ENCODE measurements at regions of chr9 and their contacts with region 1.

Region 1: DNA sequence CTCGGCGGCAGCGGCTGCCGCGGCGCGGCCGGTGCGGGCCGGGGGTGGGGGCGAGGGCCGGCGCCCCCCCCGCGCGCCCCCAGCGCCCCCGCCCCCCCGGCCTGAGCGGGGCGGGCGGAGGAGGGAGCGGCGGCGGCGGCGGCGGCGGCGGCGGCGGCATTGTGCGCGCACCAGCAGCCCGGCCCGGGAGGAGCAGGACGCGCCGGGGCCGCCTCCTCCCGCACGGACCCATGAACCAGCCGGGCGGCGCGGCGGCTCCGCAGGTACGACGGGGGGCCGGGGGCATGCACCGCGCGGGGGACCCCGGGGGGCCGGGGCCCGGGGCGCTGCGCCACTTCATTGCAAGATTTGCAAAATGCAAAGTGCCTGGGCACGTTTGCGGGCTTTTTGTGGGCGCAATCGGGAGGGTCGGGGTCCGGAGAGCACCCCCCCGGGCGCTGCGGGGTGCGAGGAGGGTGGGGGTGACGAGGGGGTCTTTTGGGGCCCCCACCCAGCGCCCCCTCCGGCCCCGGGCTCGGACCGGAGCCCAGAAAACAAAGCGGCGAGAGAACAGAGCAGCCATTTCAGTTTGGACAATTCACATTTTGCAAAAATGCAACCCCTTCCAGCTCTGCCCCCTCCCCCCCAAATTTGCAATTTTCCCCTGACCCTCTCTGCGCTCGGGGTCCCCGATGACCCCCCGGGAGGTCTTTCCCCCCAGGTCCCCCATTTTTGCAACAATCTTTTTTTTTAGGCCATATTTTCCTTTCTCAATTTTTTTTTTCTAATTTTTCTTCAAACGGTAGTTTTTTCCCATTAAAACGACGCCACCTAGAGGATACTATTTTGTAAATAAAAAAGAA is at the start of gene ZNF618:
- DNase-seq: peak; percentile 11 to 40
- ATAC-seq: peak; percentile 50 to 89 (median 70)
- H3K4me3 ChIP-seq: peak within 1 kb of the TSS; percentile 68 to 93 (median 86)
- H3K27ac ChIP-seq: peak within 1 kb of the TSS in 9 of 10 donors; percentile 35 to 82 (median 72)
- H3K4me1 ChIP-seq: peaks cover 0 to 32% (median 16%) of the 10 kb centered on the region in 9 donors
- H3K27me3 ChIP-seq: peaks cover 0 to 12% (median 0%) of the 10 kb centered on the region in 7 donors
- CTCF ChIP-seq: peak in 7 of 9 donors; percentile 38 to 61 (median 47)
- total RNA-seq, gene ZNF618: 1.1 to 2.5 (median 1.6) TPM

Region 2: GRCh38 chr9:113817171-113817570 is 59.2 kb before region 1 on chr9:
- intact Hi-C with region 1: loop called in 1 of 10 experiments (anchors 10 kb)
- DNase-seq: no peak
- ATAC-seq: no peak
- H3K4me3 ChIP-seq: no peak overlapping the region
- H3K27ac ChIP-seq: no peak overlapping the region
- H3K4me1 ChIP-seq: no peaks in the 10 kb centered on the region
- H3K27me3 ChIP-seq: peaks cover 0 to 27% (median 6%) of the 10 kb centered on the region in 7 donors
- CTCF ChIP-seq: no peak

Region 3: GRCh38 chr9:113906411-113907110 is 30.2 kb after region 1 on chr9:
- intact Hi-C with region 1: loop called in 1 of 10 experiments (anchors 1 kb)
- DNase-seq: no peak
- ATAC-seq: peak in 2 of 8 donors; percentile 25 to 49
- H3K4me3 ChIP-seq: no peak overlapping the region
- H3K27ac ChIP-seq: no peak overlapping the region
- H3K4me1 ChIP-seq: peaks cover 0 to 13% (median 0%) of the 10 kb centered on the region in 9 donors
- H3K27me3 ChIP-seq: no peaks in the 10 kb centered on the region
- CTCF ChIP-seq: no peak

Region 4: GRCh38 chr9:113934829-113935676 is 58.7 kb after region 1 on chr9:
- intact Hi-C with region 1: no loop called
- DNase-seq: no peak
- ATAC-seq: peak in 3 of 8 donors; percentile 13 to 38 (median 16)
- H3K4me3 ChIP-seq: no peak overlapping the region
- H3K27ac ChIP-seq: no peak overlapping the region
- H3K4me1 ChIP-seq: peaks cover 0 to 27% (median 3%) of the 10 kb centered on the region in 9 donors
- H3K27me3 ChIP-seq: no peaks in the 10 kb centered on the region
- CTCF ChIP-seq: no peak

Region 5: DNA sequence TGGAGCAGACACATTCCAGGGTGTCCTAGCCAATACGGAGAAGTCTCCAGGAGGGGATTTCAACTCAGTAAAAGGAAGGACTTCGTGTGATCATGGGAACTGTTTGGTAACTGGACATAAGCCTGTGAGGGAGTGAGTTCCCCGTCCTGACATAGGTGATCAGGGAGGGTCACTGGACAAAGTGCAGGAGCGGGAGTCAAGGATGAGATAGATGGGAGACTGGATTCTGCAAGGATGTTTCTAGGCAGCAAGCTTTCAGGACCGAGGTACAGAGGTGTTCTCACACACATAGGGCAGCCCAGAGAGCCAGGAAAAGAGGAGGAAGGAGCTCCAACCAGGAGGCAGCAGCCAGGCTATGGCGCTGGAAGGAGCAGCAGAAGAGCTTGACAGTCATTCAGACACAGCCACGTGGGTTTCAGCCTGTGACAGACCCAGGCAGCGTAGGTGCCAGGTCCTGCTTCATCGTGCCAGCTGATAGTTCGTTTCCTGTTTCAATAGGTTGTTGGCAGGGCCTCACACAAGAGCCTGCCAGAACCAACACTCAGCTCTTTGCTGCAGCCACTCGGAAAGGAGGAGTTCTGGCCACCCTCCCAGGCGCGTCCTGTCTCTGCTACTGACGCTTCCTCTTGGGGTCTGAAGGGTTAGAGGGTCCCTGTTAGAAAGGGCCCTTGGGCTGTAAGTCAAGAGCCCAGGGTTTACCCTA is 117.6 kb after region 1 on chr9:
- intact Hi-C with region 1: loop called in 2 of 10 experiments (anchors 10 kb)
- DNase-seq: peak; percentile 86 to 89
- ATAC-seq: peak; percentile 81 to 95 (median 90)
- H3K4me3 ChIP-seq: no peak overlapping the region
- H3K27ac ChIP-seq: peak overlapping the region in 4 of 10 donors; percentile 8 to 48 (median 38)
- H3K4me1 ChIP-seq: peaks cover 21 to 65% (median 42%) of the 10 kb centered on the region in 9 donors
- H3K27me3 ChIP-seq: no peaks in the 10 kb centered on the region
- CTCF ChIP-seq: no peak

Region 6: DNA sequence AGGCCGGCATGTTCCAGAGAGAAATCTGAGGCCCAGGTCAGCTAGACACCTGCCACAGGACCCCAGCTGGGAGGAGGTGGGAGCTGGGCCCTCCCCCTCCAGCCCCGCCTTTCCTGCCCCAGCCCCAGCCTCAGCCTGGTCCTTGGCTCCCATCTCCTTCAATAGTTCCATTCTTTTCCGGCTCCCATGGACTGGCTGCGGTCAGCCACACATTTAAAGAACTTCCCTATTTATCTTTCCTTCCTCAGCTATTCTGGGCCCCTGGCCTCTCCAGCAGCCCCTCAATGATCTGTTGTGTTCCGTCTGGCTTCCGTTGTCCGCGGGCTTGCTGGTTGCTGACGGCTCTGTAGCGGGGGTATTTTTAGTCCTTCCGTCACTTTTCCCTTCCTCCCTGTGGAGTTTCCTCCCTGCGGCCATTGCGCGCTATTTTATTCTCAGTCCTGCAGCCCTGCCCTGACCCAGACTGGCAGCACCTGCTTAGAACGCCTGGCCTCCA is 127.9 kb after region 1 on chr9:
- intact Hi-C with region 1: loop called in 3 of 10 experiments (anchors 5 to 10 kb)
- DNase-seq: peak; percentile 59 to 89
- ATAC-seq: peak; percentile 89 to 95 (median 93)
- H3K4me3 ChIP-seq: peak overlapping the region in 5 of 10 donors; percentile 8 to 33 (median 23)
- H3K27ac ChIP-seq: peak overlapping the region; percentile 38 to 89 (median 66)
- H3K4me1 ChIP-seq: peaks cover 8 to 35% (median 23%) of the 10 kb centered on the region in 9 donors
- H3K27me3 ChIP-seq: no peaks in the 10 kb centered on the region
- CTCF ChIP-seq: peak in 3 of 9 donors; percentile 6 to 16 (median 9)

Region 7: GRCh38 chr9:114030364-114030763 is 154.0 kb after region 1 on chr9:
- intact Hi-C with region 1: no loop called
- DNase-seq: no peak
- ATAC-seq: no peak
- H3K4me3 ChIP-seq: no peak overlapping the region
- H3K27ac ChIP-seq: no peak overlapping the region
- H3K4me1 ChIP-seq: peaks cover 0 to 7% (median 0%) of the 10 kb centered on the region in 9 donors
- H3K27me3 ChIP-seq: no peaks in the 10 kb centered on the region
- CTCF ChIP-seq: no peak